B cell (primary cell): ENCODE measurements at regions of chr2 and their contacts with region 1.

Region 1: GRCh38 chr2:195498176-195498575 is 158.8 kb upstream of the SLC39A10 start:
- DNase-seq: peak; percentile 75
- ATAC-seq: peak; percentile 36
- H3K4me3 ChIP-seq: no peak overlapping the region
- H3K4me3 Mint-ChIP-seq: no peak overlapping the region
- H3K27ac ChIP-seq: no peak overlapping the region
- H3K27ac Mint-ChIP-seq: peak overlapping the region; percentile 1
- H3K4me1 ChIP-seq: peaks cover 5 to 16% of the 10 kb centered on the region in 2 donors
- H3K4me1 Mint-ChIP-seq: peaks cover 19% of the 10 kb centered on the region
- H3K27me3 ChIP-seq: no peaks in the 10 kb centered on the region
- H3K27me3 Mint-ChIP-seq: no peaks in the 10 kb centered on the region
- CTCF ChIP-seq: peak; percentile 72

Region 2: GRCh38 chr2:195533771-195534642 is 35.8 kb after region 1 on chr2:
- CTCF ChIA-PET with region 1: interaction called, 22 read pairs
- POLR2A ChIA-PET with region 1: no interaction called
- intact Hi-C with region 1: loop called (anchors 1 kb)
- DNase-seq: peak; percentile 31
- ATAC-seq: peak; percentile 60
- H3K4me3 ChIP-seq: peak overlapping the region in 1 of 5 experiments; percentile 62
- H3K4me3 Mint-ChIP-seq: peak overlapping the region; percentile 83
- H3K27ac ChIP-seq: peak overlapping the region; percentile 62 to 83
- H3K27ac Mint-ChIP-seq: peak overlapping the region; percentile 92
- H3K4me1 ChIP-seq: peaks cover 57 to 58% of the 10 kb centered on the region in 2 donors
- H3K4me1 Mint-ChIP-seq: peaks cover 65% of the 10 kb centered on the region
- H3K27me3 ChIP-seq: no peaks in the 10 kb centered on the region
- H3K27me3 Mint-ChIP-seq: no peaks in the 10 kb centered on the region
- CTCF ChIP-seq: no peak

Region 3: GRCh38 chr2:195575879-195576401 is 77.8 kb after region 1 on chr2:
- CTCF ChIA-PET with region 1: interaction called, 79 read pairs
- POLR2A ChIA-PET with region 1: no interaction called
- intact Hi-C with region 1: loop called (anchors 1 kb)
- DNase-seq: peak; percentile 85
- ATAC-seq: peak; percentile 91
- H3K4me3 ChIP-seq: peak overlapping the region in 4 of 5 experiments; percentile 9 to 40 (median 24)
- H3K4me3 Mint-ChIP-seq: peak overlapping the region; percentile 63
- H3K27ac ChIP-seq: peak overlapping the region; percentile 11 to 62
- H3K27ac Mint-ChIP-seq: peak overlapping the region; percentile 76
- H3K4me1 ChIP-seq: peaks cover 43 to 47% of the 10 kb centered on the region in 2 donors
- H3K4me1 Mint-ChIP-seq: peaks cover 54% of the 10 kb centered on the region
- H3K27me3 ChIP-seq: no peaks in the 10 kb centered on the region
- H3K27me3 Mint-ChIP-seq: no peaks in the 10 kb centered on the region
- CTCF ChIP-seq: peak; percentile 42

Region 4: DNA sequence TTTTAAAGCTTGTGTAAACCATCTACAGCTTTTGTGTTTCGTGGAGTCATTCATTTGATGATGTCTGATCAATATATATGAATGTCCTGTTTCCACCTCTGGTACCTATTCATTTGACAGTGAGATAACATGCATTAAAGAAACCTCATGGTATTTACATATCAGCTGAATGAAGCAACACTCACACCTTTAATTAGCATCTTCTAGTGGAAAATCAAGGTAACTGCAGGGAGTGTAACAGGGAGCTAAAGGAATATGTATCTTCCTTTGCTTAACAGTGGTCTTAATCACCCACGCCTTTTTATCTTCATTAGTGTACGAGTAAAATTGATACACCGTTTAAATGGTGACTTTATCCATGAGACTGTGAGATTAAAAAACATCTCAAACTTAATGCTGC is 174.5 kb after region 1 on chr2:
- CTCF ChIA-PET with region 1: interaction called, 10 read pairs
- POLR2A ChIA-PET with region 1: no interaction called
- intact Hi-C with region 1: no loop called
- DNase-seq: no peak
- ATAC-seq: no peak
- H3K4me3 ChIP-seq: no peak overlapping the region
- H3K4me3 Mint-ChIP-seq: no peak overlapping the region
- H3K27ac ChIP-seq: no peak overlapping the region
- H3K27ac Mint-ChIP-seq: no peak overlapping the region
- H3K4me1 ChIP-seq: no peaks in the 10 kb centered on the region
- H3K4me1 Mint-ChIP-seq: peaks cover 23% of the 10 kb centered on the region
- H3K27me3 ChIP-seq: no peaks in the 10 kb centered on the region
- H3K27me3 Mint-ChIP-seq: no peaks in the 10 kb centered on the region
- CTCF ChIP-seq: no peak

Region 5: GRCh38 chr2:195795879-195796278 is 297.7 kb after region 1 on chr2:
- CTCF ChIA-PET with region 1: no interaction called
- POLR2A ChIA-PET with region 1: no interaction called
- intact Hi-C with region 1: no loop called
- DNase-seq: no peak
- ATAC-seq: no peak
- H3K4me3 ChIP-seq: no peak overlapping the region
- H3K4me3 Mint-ChIP-seq: no peak overlapping the region
- H3K27ac ChIP-seq: no peak overlapping the region
- H3K27ac Mint-ChIP-seq: no peak overlapping the region
- H3K4me1 ChIP-seq: no peaks in the 10 kb centered on the region
- H3K4me1 Mint-ChIP-seq: no peaks in the 10 kb centered on the region
- H3K27me3 ChIP-seq: no peaks in the 10 kb centered on the region
- H3K27me3 Mint-ChIP-seq: no peaks in the 10 kb centered on the region
- CTCF ChIP-seq: no peak

Region 6: GRCh38 chr2:195861821-195862220 is 363.6 kb after region 1 on chr2:
- CTCF ChIA-PET with region 1: no interaction called
- POLR2A ChIA-PET with region 1: no interaction called
- intact Hi-C with region 1: no loop called
- DNase-seq: no peak
- ATAC-seq: no peak
- H3K4me3 ChIP-seq: no peak overlapping the region
- H3K4me3 Mint-ChIP-seq: no peak overlapping the region
- H3K27ac ChIP-seq: no peak overlapping the region
- H3K27ac Mint-ChIP-seq: no peak overlapping the region
- H3K4me1 ChIP-seq: no peaks in the 10 kb centered on the region
- H3K4me1 Mint-ChIP-seq: no peaks in the 10 kb centered on the region
- H3K27me3 ChIP-seq: no peaks in the 10 kb centered on the region
- H3K27me3 Mint-ChIP-seq: peaks cover 9% of the 10 kb centered on the region
- CTCF ChIP-seq: no peak

Region 7: DNA sequence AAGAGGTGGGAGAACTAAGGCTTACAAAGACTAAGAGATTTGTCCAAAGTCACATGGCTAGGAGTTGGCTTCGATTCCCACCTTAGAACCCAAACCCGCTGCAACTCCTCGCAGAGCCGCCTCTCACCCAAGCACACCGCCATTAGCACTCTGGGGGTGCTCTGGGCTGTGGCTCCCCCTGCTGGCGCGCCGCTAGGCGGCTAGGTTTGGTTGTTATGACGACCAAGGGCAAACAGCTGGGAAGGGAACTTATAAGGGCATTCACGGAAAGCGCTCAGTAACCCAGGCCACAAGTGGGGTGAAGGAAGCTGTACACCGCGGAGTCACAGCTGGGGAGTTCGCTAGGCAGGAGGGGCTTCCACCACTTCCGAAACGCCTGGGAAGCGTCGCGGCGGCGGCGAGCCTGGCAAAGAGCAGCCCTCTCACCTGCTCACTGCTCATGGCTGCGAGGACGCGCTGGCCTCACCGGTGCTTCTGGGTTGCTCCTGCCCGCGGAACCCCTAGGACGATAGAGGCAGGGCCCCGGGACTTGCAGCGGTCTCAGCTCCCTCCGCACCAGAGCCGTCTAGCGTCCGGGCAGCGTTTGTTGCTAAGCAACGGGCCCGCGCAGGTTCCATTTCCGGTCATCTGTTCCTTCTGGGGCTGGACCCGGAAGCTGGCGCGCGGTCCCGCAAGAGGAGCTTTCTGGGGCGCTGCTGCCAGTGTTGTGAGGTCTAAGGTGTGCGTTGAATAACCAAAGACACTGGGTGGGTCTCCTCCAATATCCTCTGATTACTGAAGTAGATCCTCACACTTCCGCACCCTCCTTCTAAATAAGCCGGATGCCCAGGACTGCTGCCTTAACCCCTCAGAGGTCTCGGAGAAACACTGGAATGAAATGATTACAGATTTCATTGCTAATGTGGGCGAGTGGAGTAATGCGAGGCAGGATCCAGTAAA is 570.4 kb after region 1 on chr2 and contains the start of gene DNAH7:
- CTCF ChIA-PET with region 1: interaction called, 15 read pairs
- POLR2A ChIA-PET with region 1: no interaction called
- intact Hi-C with region 1: loop called (anchors 1 kb)
- DNase-seq: peak; percentile 96
- ATAC-seq: peak; percentile 92
- H3K4me3 ChIP-seq: peak within 1 kb of the TSS; percentile 46 to 81 (median 64)
- H3K4me3 Mint-ChIP-seq: peak within 1 kb of the TSS; percentile 96
- H3K27ac ChIP-seq: peak within 1 kb of the TSS; percentile 30 to 73
- H3K27ac Mint-ChIP-seq: peak within 1 kb of the TSS; percentile 93
- H3K4me1 ChIP-seq: peaks cover 12 to 13% of the 10 kb centered on the region in 2 donors
- H3K4me1 Mint-ChIP-seq: peaks cover 15% of the 10 kb centered on the region
- H3K27me3 ChIP-seq: no peaks in the 10 kb centered on the region
- H3K27me3 Mint-ChIP-seq: peaks cover 2% of the 10 kb centered on the region
- CTCF ChIP-seq: peak; percentile 97
- total RNA-seq, gene DNAH7: 0.05 TPM in 1 of 2 replicates, not detected in the other